PC-9 (cell line): ENCODE measurements at regions of chr19 and their contacts with region 1.

Region 1: GRCh38 chr19:42378225-42379215 is 11.6 kb downstream of the CNFN start:
- DNase-seq: no peak
- H3K4me3 ChIP-seq: no peak overlapping the region
- H3K27ac ChIP-seq: no peak overlapping the region
- H3K4me1 ChIP-seq: no peaks in the 10 kb centered on the region
- H3K27me3 ChIP-seq: no peaks in the 10 kb centered on the region
- CTCF ChIP-seq: no peak

Region 2: DNA sequence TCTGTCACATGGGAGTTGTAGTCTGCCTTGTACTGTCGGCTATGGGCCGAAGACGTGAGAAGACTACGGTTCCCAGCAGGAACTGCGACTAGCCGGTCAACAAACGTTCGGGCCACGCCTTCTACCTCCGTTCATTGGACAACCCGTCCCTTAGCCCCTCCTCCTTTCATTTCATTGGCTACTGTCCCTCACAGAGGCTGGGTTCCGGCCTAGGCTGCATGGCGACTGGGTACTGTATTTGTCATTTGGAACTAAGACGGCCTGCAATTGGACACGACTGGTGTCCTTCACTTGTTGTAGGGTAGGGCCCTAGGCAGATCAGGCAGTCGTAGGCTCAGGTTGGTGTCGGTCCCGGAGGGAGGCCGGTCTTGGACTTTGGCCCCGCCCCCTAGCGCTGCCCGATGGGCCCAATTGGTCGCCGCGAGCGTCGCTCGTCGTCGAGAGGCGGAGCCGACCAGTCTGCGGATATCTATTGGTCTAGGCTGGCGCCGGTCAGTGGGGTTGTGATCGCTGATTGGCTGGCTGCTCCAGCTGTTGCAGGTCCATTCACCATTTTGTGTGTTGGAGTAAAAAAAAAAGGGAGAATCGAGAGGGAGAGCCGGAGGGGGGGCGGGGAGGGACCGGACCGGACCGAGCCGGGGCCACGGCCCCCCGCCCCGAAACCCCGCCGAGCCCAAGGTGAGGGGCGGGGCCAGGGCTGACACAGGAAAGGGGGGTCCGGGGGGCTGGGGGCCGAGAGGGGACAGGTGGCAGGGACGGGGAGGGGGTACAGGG is 109.6 kb before region 1 on chr19 and contains the start of gene CIC:
- CTCF ChIA-PET with region 1: no interaction called
- POLR2A ChIA-PET with region 1: no interaction called
- intact Hi-C with region 1: no loop called
- DNase-seq: peak; percentile 99 to 100
- H3K4me3 ChIP-seq: peak within 1 kb of the TSS; percentile 76
- H3K27ac ChIP-seq: peak within 1 kb of the TSS; percentile 70
- H3K4me1 ChIP-seq: peaks cover 20% of the 10 kb centered on the region
- H3K27me3 ChIP-seq: no peaks in the 10 kb centered on the region
- CTCF ChIP-seq: no peak
- total RNA-seq, gene CIC: 58.1 and 60.7 TPM in 2 replicates

Region 3: DNA sequence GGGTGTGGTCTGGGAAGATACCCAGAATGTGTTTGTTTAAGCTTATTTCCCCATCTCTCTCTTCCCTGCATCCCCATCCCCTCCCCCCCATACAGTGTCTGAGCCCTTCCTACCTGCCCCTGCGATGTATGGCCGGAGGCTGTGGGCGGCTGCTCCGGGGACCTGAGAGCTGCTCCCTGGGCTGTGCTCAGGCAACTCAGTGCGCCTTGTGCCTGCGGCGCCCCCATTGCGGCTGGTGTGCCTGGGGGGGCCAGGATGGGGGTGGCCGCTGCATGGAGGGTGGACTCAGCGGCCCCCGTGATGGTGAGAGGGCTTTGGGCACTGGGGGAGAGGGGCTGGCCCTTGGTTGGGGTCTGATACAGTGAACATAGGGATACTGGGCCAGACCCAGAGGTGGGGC is 10.2 kb before region 1 on chr19:
- CTCF ChIA-PET with region 1: interaction called, 12 read pairs
- POLR2A ChIA-PET with region 1: no interaction called
- intact Hi-C with region 1: no loop called
- DNase-seq: no peak
- H3K4me3 ChIP-seq: no peak overlapping the region
- H3K27ac ChIP-seq: no peak overlapping the region
- H3K4me1 ChIP-seq: no peaks in the 10 kb centered on the region
- H3K27me3 ChIP-seq: no peaks in the 10 kb centered on the region
- CTCF ChIP-seq: no peak

Region 4: GRCh38 chr19:42392165-42392564 is 13.6 kb after region 1 on chr19:
- CTCF ChIA-PET with region 1: no interaction called
- POLR2A ChIA-PET with region 1: no interaction called
- intact Hi-C with region 1: no loop called
- DNase-seq: no peak
- H3K4me3 ChIP-seq: no peak overlapping the region
- H3K27ac ChIP-seq: no peak overlapping the region
- H3K4me1 ChIP-seq: peaks cover 33% of the 10 kb centered on the region
- H3K27me3 ChIP-seq: peaks cover 5% of the 10 kb centered on the region; the same call in 1 of the 2 replicates
- CTCF ChIP-seq: no peak

Region 5: DNA sequence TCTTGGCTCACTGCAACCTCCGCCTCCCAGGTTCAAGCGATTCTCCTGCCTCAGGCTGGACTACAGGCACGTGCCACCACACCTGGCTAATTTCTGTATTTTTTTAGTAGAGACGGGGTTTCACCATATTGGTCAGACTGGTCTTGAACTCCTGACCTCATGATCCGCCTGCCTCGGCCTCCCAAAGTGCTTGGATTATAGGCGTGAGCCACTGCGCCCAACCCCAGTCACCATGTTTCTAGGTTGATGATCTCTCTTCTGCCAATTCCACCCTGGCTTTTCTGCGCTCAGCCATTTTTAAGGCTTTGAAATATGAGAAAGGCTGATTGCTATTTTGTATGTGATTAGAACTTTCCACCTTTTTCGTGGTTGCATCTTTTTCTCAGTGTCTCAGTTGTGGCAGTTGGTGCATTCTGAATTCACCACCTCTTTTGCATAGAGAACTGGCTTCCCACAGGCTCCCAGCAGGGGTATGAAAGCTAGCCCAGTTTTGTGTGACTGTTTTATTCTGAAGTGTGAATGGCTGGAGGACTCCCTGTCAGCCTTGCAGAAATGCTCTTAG is 134.3 kb after region 1 on chr19:
- CTCF ChIA-PET with region 1: no interaction called
- POLR2A ChIA-PET with region 1: interaction called, 10 read pairs
- intact Hi-C with region 1: no loop called
- DNase-seq: no peak
- H3K4me3 ChIP-seq: no peak overlapping the region
- H3K27ac ChIP-seq: no peak overlapping the region
- H3K4me1 ChIP-seq: no peaks in the 10 kb centered on the region
- H3K27me3 ChIP-seq: no peaks in the 10 kb centered on the region
- CTCF ChIP-seq: no peak